A673 (cell line): ENCODE measurements at regions of chr1 and their contacts with region 1.

Region 1: GRCh38 chr1:239976130-239976968 is 115.3 kb upstream of the FMN2 start:
- DNase-seq: peak; percentile 30
- H3K4me3 ChIP-seq: no peak overlapping the region
- H3K27ac ChIP-seq: no peak overlapping the region
- H3K4me1 ChIP-seq: no peaks in the 10 kb centered on the region
- H3K27me3 ChIP-seq: no peaks in the 10 kb centered on the region
- CTCF ChIP-seq: peak; percentile 75

Region 2: DNA sequence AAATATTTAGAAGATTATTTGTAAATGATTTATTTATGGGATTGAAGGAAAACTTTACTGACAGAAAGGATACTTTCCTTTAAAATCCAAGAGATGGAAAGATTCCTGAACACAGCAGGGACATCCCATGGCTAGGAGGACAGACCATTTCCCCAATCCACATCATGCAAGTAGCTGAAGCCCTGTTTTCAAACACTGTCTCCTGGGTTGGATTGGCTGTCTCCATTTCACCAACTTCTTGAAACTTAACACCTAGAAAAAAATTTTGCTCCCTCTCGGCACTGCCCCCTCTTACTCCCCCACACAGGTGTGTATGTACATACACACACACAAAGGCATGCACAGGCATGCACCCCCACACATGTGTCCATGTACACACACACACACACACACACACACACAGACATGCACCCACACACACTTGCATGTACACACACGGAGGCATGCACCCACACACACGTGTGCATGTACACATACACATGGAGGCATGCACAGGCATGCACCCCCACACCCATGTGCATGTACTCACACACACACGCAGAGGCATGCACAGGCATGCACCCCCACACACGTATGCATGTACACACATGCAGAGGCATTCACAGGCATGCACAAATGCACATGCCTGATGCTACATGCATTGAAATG is 270.0 kb before region 1 on chr1:
- CTCF ChIA-PET with region 1: no interaction called
- POLR2A ChIA-PET with region 1: no interaction called
- intact Hi-C with region 1: no loop called
- DNase-seq: no peak
- H3K4me3 ChIP-seq: no peak overlapping the region
- H3K27ac ChIP-seq: no peak overlapping the region
- H3K4me1 ChIP-seq: no peaks in the 10 kb centered on the region
- H3K27me3 ChIP-seq: no peaks in the 10 kb centered on the region
- CTCF ChIP-seq: no peak

Region 3: GRCh38 chr1:239951511-239952140 is 24.7 kb before region 1 on chr1:
- CTCF ChIA-PET with region 1: no interaction called
- POLR2A ChIA-PET with region 1: no interaction called
- intact Hi-C with region 1: loop called (anchors 1 kb)
- DNase-seq: peak; percentile 45
- H3K4me3 ChIP-seq: no peak overlapping the region
- H3K27ac ChIP-seq: no peak overlapping the region
- H3K4me1 ChIP-seq: no peaks in the 10 kb centered on the region
- H3K27me3 ChIP-seq: no peaks in the 10 kb centered on the region
- CTCF ChIP-seq: peak; percentile 56

Region 4: GRCh38 chr1:240058049-240058448 is 81.7 kb after region 1 on chr1:
- CTCF ChIA-PET with region 1: no interaction called
- POLR2A ChIA-PET with region 1: no interaction called
- intact Hi-C with region 1: no loop called
- DNase-seq: no peak
- H3K4me3 ChIP-seq: no peak overlapping the region
- H3K27ac ChIP-seq: no peak overlapping the region
- H3K4me1 ChIP-seq: no peaks in the 10 kb centered on the region
- H3K27me3 ChIP-seq: no peaks in the 10 kb centered on the region
- CTCF ChIP-seq: no peak